Right ventricle myocardium inferior (tissue), 1 donor: ENCODE measurements at regions of chr3 and their contacts with region 1.

Region 1: DNA sequence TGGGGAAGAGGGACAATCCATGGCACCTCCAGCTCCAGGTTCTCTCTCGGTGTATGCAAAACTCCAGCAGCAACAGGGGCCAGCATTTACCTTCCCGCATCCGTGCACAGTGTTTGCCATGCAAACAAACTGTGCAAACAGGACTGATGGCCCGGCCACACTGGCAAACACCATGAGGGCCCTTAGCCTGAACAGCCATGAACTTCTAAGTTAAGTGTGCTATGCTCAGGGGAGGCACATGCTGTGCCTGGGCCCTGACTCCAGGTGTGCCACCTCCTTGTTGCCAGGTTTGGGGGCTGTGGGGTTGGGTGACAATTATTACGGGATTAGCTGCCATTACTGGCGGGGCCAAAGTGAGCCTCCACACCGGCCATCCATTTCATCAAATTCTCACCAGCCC is 57.5 kb downstream of the CACNA2D2 start:
- DNase-seq: no peak
- ATAC-seq: no peak

Region 2: DNA sequence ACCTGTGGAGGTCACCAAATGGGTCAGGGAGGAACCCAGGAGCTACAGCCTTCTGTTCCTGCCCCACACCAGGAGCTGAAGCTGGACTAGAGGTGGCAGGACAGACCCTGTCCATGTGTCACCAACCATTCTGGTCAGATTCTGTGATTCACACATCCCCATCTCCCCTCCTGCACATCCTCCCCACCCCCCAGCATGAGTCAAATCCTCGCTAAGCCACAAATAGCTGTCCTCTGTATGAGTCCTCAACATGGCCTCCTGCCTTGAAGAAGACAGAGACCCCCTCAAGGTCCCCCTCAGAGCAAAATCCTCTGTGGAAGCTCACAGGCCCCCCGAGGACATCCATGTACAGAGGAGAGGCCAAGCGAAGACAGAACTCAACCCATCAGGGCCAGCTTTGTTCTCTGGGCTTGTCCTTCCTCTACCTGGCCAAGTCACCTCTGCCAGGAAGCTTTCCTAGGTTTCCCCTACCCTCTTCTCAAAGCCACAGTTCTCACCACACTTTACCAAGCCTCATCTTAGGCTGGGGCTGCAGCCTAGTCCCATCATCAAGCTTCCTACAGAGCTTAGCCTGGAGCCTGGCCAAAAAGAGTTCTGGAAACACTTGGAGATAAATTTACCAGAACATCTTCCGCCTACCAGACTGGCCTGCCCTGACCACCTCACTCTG is 40.4 kb after region 1 on chr3:
- intact Hi-C with region 1: loop called (anchors 5 kb)
- DNase-seq: no peak
- ATAC-seq: no peak